OCI-LY7 (cell line): ENCODE measurements at regions of chr9 and their contacts with region 1.

Region 1: GRCh38 chr9:137665697-137666510 is 47.1 kb downstream of the EHMT1 start:
- DNase-seq: no peak
- H3K4me3 ChIP-seq: peak overlapping the region; percentile 58
- H3K27ac ChIP-seq: peak overlapping the region; percentile 95
- H3K4me1 ChIP-seq: peaks cover 93% of the 10 kb centered on the region
- CTCF ChIP-seq: no peak

Region 2: GRCh38 chr9:136882109-136882946 is 783.6 kb before region 1 on chr9:
- CTCF ChIA-PET with region 1: no interaction called
- POLR2A ChIA-PET with region 1: no interaction called
- intact Hi-C with region 1: no loop called
- DNase-seq: peak; percentile 25
- H3K4me3 ChIP-seq: no peak overlapping the region
- H3K27ac ChIP-seq: no peak overlapping the region
- H3K4me1 ChIP-seq: peaks cover 21% of the 10 kb centered on the region
- CTCF ChIP-seq: no peak

Region 3: DNA sequence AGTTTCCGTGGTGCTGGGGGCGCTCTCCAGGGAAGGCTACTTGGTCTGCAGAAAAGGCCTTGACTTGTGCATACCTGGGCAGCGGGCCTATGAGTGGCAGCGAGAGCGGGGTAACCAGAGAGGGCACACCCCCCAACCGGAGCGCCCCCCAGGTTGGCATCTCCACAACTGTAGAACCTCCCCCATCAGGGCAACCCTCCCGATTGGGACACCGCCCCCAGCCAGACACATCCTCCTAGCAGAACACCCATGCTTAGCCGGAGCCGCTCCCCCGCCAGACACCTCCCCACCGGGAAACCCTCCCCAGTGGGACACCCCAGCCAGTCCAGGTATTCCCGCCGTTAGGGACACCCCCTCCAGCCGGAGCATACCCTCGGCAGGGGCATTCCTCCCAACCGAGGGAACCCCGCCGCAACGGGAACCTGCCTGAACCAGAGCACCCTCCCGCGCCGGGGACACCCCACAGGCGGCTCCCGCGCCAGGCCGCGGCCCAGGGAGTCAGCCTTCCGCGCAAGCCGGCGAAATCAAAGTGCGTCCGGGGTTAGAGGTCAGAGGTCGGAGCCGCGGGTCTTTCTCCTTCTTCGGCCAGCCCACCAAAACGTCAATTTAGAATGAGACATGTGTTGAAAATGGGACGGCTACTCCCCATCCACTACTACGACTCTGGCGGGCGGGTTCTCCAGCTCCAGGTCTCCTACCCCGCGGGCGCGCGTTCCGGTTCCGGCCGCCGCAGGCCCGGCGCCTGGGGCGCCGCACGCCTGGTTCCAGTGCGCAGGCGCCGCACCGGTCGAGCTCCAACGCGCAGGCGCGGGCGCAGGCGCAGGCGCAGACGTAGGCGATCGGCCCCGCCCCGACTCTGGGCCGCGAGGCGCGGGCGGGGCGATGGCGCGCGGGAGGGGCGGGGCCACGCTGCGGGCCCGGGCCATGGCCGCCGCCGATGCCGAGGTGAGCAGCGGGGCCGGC is 47.5 kb before region 1 on chr9 and contains the start of gene EHMT1:
- CTCF ChIA-PET with region 1: interaction called, 4 read pairs
- POLR2A ChIA-PET with region 1: interaction called, 10 read pairs
- intact Hi-C with region 1: loop called (anchors 2 kb)
- DNase-seq: peak; percentile 92
- H3K4me3 ChIP-seq: peak within 1 kb of the TSS; percentile 94
- H3K27ac ChIP-seq: peak within 1 kb of the TSS; percentile 81
- H3K4me1 ChIP-seq: peaks cover 44% of the 10 kb centered on the region
- CTCF ChIP-seq: peak; percentile 43; the same call in 1 of the 2 replicates
- total RNA-seq, gene EHMT1: 143 and 145 TPM in 2 replicates